Mammary epithelial cell (primary cell): ENCODE measurements at regions of chr5 and their contacts with region 1.

Region 1: GRCh38 chr5:157431544-157432200 is 28.3 kb upstream of the NIPAL4 start:
- DNase-seq: peak; percentile 50
- H3K4me3 ChIP-seq: no peak overlapping the region
- H3K27ac ChIP-seq: no peak overlapping the region
- H3K4me1 ChIP-seq: no peaks in the 10 kb centered on the region
- H3K27me3 ChIP-seq: no peaks in the 10 kb centered on the region
- CTCF ChIP-seq: peak; percentile 49 to 62

Region 2: GRCh38 chr5:157253547-157253946 is 178.1 kb before region 1 on chr5:
- CTCF ChIA-PET with region 1: interaction called, 12 read pairs
- dilution Hi-C with region 1: no loop called
- in situ Hi-C with region 1: no loop called
- intact Hi-C with region 1: no loop called
- DNase-seq: peak; percentile 29
- H3K4me3 ChIP-seq: no peak overlapping the region
- H3K27ac ChIP-seq: no peak overlapping the region
- H3K4me1 ChIP-seq: no peaks in the 10 kb centered on the region
- H3K27me3 ChIP-seq: no peaks in the 10 kb centered on the region
- CTCF ChIP-seq: peak; percentile 85 to 94

Region 3: GRCh38 chr5:157328277-157328912 is 103.3 kb before region 1 on chr5:
- CTCF ChIA-PET with region 1: no interaction called
- dilution Hi-C with region 1: no loop called
- in situ Hi-C with region 1: no loop called
- intact Hi-C with region 1: loop called (anchors 2 kb)
- DNase-seq: peak; percentile 52
- H3K4me3 ChIP-seq: peak overlapping the region in 1 of 3 experiments; percentile 34
- H3K27ac ChIP-seq: no peak overlapping the region
- H3K4me1 ChIP-seq: no peaks in the 10 kb centered on the region
- H3K27me3 ChIP-seq: no peaks in the 10 kb centered on the region
- CTCF ChIP-seq: peak; percentile 97

Region 4: GRCh38 chr5:157342822-157343402 is 88.8 kb before region 1 on chr5:
- CTCF ChIA-PET with region 1: no interaction called
- dilution Hi-C with region 1: no loop called
- in situ Hi-C with region 1: no loop called
- intact Hi-C with region 1: loop called (anchors 1 kb)
- DNase-seq: peak; percentile 6
- H3K4me3 ChIP-seq: no peak overlapping the region
- H3K27ac ChIP-seq: no peak overlapping the region
- H3K4me1 ChIP-seq: no peaks in the 10 kb centered on the region
- H3K27me3 ChIP-seq: no peaks in the 10 kb centered on the region
- CTCF ChIP-seq: peak; percentile 61 to 76

Region 5: GRCh38 chr5:157471709-157472108 is 40.0 kb after region 1 on chr5:
- CTCF ChIA-PET with region 1: no interaction called
- dilution Hi-C with region 1: no loop called
- in situ Hi-C with region 1: loop called in 1 of 2 experiments (anchors 5 kb)
- intact Hi-C with region 1: loop called (anchors 1 kb)
- DNase-seq: peak; percentile 25
- H3K4me3 ChIP-seq: no peak overlapping the region
- H3K27ac ChIP-seq: no peak overlapping the region
- H3K4me1 ChIP-seq: no peaks in the 10 kb centered on the region
- H3K27me3 ChIP-seq: no peaks in the 10 kb centered on the region
- CTCF ChIP-seq: peak; percentile 72 to 73

Region 6: GRCh38 chr5:157718519-157718918 is 286.8 kb after region 1 on chr5:
- CTCF ChIA-PET with region 1: no interaction called
- dilution Hi-C with region 1: no loop called
- in situ Hi-C with region 1: no loop called
- intact Hi-C with region 1: loop called (anchors 2 kb)
- DNase-seq: peak; percentile 52
- H3K4me3 ChIP-seq: no peak overlapping the region
- H3K27ac ChIP-seq: no peak overlapping the region
- H3K4me1 ChIP-seq: no peaks in the 10 kb centered on the region
- H3K27me3 ChIP-seq: no peaks in the 10 kb centered on the region
- CTCF ChIP-seq: peak; percentile 39 to 64

Region 7: DNA sequence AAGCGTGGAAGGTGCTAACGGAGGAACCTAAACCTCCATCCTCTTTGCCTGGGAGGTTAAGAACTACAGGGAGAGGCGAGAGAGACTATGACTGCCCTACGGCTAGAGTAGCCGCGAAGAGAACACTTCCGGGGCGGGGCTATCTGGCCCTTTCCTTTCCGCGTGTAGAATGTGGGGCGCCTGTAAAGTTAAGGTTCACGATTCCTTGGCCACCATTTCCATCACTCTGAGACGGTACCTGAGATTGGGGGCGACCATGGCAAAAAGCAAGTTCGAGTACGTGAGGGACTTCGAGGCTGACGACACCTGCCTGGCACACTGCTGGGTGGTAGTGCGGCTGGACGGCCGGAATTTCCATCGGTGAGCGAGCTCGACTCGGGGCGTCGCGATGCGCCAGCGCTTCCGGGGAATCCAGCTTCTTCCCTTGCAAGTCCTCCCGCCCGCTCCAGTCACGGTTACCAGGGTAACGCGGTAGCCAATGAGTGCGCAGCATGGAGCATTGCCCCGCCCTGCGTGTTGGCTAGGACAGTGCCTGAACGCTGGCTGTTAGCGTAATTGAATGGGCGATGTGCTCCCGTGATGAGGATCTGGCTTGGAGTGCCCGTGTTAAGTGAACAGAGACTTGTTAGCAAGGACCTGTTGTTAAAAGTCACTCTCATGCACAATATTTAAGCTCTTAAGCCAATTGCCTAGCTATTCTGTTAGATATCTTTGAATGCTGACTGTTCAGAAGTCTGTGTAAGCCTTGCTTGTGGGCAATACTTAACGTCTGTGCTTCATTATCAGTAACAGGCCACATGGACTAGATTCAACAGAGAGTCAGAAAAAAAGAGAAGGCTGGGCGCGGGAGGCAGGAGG is 299.8 kb after region 1 on chr5 and contains the start of gene THG1L:
- CTCF ChIA-PET with region 1: interaction called, 11 read pairs
- dilution Hi-C with region 1: no loop called
- in situ Hi-C with region 1: no loop called
- intact Hi-C with region 1: no loop called
- DNase-seq: peak; percentile 98
- H3K4me3 ChIP-seq: peak within 1 kb of the TSS; percentile 50 to 72 (median 66)
- H3K27ac ChIP-seq: peak within 1 kb of the TSS; percentile 76
- H3K4me1 ChIP-seq: no peaks in the 10 kb centered on the region
- H3K27me3 ChIP-seq: no peaks in the 10 kb centered on the region
- CTCF ChIP-seq: no peak
- total RNA-seq, gene THG1L: 11.3 to 13.5 TPM